Cardiac septum (tissue), 1 donor: ENCODE measurements at regions of chr16 and their contacts with region 1.

Region 1: GRCh38 chr16:85027349-85027957 is at the start of gene KIAA0513:
- DNase-seq: peak; percentile 98
- total RNA-seq, gene KIAA0513: 8.3 TPM

Region 2: GRCh38 chr16:85010931-85011845 is 16.3 kb before region 1 on chr16 and contains the start of gene ZDHHC7:
- intact Hi-C with region 1: loop called (anchors 2 kb)
- DNase-seq: peak; percentile 94
- total RNA-seq, gene ZDHHC7: 43.7 TPM

Region 3: GRCh38 chr16:85393674-85394483 is 366.4 kb after region 1 on chr16:
- intact Hi-C with region 1: no loop called
- DNase-seq: peak; percentile 83